Activated naive CD4-positive, alpha-beta T cell treated with anti-CD3 and anti-CD28 coated beads for 36 hours (primary cell): ENCODE measurements at regions of chr17 and their contacts with region 1.

Region 1: DNA sequence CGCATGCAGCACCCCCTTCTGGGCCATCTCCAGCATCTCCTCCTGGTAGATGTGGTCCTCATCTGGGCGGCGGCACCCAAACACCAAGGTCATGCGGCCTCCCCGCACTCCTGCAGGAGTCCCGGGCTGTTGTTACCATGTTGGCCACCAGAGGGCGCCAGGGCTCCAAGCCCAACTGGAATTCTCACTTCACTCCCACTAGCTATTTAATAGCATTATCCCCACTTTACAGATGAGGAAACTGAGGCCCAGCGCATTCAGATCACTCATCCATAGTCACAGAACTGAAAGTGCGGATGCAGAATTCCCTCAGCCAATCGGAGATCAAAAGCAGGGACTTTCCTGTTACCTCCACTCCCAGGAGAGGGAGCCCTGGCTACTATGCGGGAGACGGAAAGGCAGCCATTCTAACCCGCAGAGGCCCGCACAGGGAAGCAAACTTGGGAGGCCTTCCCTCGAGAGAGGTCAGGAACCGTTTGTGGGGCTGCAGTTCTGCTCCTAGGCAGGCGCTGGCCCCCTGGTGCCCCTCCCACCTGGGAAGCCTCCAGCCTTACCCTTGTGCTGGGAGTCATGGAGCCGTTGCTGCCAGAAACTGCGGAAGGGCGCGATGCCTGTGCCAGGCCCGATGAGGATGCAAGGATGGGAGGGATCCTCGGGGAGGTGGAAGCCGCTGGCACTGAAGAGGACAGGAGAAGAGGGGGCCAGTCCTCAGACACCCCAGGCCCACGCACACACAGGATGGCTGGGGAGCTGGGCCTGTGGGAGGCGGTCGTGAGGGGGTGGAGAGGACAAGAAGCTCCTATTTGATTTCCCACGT is 40.1 kb downstream of the NOS2 start:
- DNase-seq: peak; percentile 83
- H3K4me3 Mint-ChIP-seq: no peak overlapping the region
- H3K27ac Mint-ChIP-seq: no peak overlapping the region
- H3K4me1 Mint-ChIP-seq: no peaks in the 10 kb centered on the region
- H3K27me3 Mint-ChIP-seq: no peaks in the 10 kb centered on the region

Region 2: DNA sequence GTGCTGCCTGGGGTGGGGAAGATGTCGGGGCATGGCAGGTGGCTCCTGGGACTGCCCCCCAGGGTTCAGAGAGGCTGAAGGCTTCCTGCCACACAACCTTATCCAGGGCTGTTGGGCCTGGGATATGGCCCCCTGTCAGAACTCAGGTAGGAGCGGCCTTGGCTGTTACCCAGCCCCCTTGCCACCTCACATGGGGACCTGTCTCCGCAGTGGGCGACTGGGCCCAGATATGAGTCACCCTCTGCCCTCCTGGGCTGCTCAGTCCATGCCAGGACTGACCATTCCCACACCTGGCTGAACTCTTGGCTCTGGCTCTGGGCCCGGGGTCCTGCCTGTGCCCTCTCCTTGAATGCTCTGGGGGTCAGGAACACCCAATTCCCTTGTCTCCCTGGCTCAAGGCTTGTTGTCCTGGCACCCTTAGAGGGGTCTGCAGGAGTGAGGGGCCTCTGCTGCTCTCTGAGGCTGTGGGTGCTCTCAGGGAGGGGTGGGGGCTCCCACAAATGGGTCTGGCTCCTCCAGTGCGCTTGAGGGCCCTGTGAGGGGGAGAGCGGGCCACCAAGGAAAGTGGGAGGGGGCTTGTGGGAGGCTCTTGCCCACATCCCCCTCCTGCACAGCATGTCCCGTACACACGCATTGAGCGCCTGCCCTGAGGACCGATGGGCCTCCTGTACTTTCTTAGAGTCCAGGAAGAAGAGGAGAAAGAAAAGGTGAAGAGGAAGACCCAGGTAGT is 93.3 kb before region 1 on chr17:
- CTCF ChIA-PET with region 1: interaction called, 10 read pairs
- intact Hi-C with region 1: no loop called
- DNase-seq: no peak
- H3K4me3 Mint-ChIP-seq: no peak overlapping the region
- H3K27ac Mint-ChIP-seq: no peak overlapping the region
- H3K4me1 Mint-ChIP-seq: no peaks in the 10 kb centered on the region
- H3K27me3 Mint-ChIP-seq: no peaks in the 10 kb centered on the region

Region 3: DNA sequence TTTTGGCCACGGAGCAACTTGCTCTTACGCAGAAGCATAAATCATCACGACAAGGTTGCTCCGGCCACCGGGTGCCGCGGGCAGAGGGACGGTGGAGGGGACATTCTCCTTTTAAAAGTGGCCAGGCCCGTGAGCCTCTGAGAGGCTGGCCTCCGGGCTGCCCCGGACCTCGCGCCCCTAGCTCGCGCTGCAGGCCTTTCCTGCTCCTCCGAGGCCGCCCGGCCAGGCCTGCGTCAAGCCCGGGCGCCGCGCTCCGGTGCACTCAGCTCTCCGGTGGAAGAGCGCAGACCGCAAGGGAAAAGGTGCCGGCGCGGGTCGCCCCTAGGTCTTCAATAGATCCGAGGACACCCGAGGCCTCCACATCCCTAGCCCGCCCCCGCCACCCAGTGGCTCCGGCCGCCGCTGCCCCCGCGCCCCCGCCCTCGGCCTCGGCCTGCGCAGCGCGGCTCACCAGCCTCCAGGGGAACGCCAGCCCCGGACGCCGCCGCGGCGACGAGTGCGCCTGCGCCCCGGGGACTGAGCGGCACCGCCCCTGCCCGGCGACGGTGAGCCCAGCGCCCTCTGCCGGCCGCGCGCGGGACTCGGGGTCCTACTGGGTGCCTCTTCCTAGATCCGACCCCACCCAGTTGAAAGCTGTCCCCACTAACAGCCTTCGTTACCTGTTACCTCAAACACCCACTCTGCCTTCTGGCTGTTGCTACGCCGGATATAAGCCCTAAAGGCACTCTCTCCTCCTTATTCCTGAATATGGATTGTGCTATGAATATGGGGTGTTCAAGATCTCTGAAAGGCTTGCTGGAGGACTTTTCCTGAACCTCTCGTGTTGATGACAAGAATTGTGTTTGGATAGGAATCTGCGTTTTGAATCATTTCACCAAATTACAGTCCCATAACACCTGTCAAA is 132.8 kb after region 1 on chr17 and contains the start of gene LYRM9:
- CTCF ChIA-PET with region 1: interaction called, 12 read pairs
- intact Hi-C with region 1: loop called (anchors 1 kb)
- DNase-seq: peak; percentile 92
- H3K4me3 Mint-ChIP-seq: peak within 1 kb of the TSS; percentile 75
- H3K27ac Mint-ChIP-seq: peak within 1 kb of the TSS; percentile 6
- H3K4me1 Mint-ChIP-seq: peaks cover 18% of the 10 kb centered on the region
- H3K27me3 Mint-ChIP-seq: peaks cover 7% of the 10 kb centered on the region
- total RNA-seq, gene LYRM9: 5.3 to 6.9 TPM

Region 4: DNA sequence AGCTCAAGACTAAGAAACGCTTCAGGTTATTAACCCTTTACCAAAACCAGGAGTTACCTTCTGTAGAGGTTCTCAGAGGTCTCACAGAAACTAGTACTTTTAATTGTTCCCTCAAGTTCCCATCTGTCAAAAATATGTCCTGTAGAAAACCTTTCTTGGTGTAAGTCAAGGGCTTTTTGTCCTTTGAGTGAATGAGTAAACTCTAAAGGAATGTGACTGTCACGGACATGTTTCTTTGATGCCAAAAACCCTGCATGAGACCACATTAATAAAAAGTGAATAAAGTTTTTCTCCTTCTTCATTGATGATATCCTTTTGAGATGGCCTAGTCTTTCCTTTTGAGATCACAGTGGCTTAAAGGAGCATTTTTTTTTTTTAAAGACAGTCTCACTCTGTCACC is 385.1 kb after region 1 on chr17:
- CTCF ChIA-PET with region 1: no interaction called
- intact Hi-C with region 1: no loop called
- DNase-seq: no peak
- H3K4me3 Mint-ChIP-seq: no peak overlapping the region
- H3K27ac Mint-ChIP-seq: no peak overlapping the region
- H3K4me1 Mint-ChIP-seq: no peaks in the 10 kb centered on the region
- H3K27me3 Mint-ChIP-seq: no peaks in the 10 kb centered on the region

Region 5: DNA sequence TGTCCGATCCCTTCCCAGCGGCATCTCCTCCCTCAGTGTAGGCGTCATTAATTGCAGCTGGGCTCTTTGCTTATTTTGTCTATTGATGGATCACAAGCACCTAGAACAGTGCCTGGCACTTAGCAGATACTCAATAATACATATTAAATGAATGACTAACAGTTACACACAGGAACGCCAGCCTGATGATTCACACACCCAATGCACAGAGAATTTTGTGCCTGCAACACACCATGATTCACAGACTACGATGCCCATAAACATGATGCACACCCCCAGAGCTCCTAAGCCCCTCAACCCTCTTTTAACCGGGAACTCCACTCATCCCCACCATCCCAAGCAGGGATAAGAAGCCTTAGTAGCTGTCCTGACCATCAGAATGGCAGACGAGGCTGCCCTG is 492.2 kb after region 1 on chr17:
- CTCF ChIA-PET with region 1: interaction called, 13 read pairs
- intact Hi-C with region 1: loop called (anchors 1 kb)
- DNase-seq: no peak
- H3K4me3 Mint-ChIP-seq: no peak overlapping the region
- H3K27ac Mint-ChIP-seq: no peak overlapping the region
- H3K4me1 Mint-ChIP-seq: peaks cover 5% of the 10 kb centered on the region
- H3K27me3 Mint-ChIP-seq: peaks cover 4% of the 10 kb centered on the region